Mammary epithelial cell (primary cell): ENCODE measurements at regions of chr3 and their contacts with region 1.

Region 1: GRCh38 chr3:41198950-41199865 is at the start of gene CTNNB1:
- DNase-seq: peak; percentile 93
- H3K4me3 ChIP-seq: peak within 1 kb of the TSS; percentile 97 to 100 (median 100)
- H3K27ac ChIP-seq: peak within 1 kb of the TSS; percentile 89
- H3K4me1 ChIP-seq: peaks cover 8% of the 10 kb centered on the region
- H3K27me3 ChIP-seq: no peaks in the 10 kb centered on the region
- CTCF ChIP-seq: peak in 1 of 2 donors; percentile 16
- total RNA-seq, gene CTNNB1: 543 to 1,542 TPM

Region 2: DNA sequence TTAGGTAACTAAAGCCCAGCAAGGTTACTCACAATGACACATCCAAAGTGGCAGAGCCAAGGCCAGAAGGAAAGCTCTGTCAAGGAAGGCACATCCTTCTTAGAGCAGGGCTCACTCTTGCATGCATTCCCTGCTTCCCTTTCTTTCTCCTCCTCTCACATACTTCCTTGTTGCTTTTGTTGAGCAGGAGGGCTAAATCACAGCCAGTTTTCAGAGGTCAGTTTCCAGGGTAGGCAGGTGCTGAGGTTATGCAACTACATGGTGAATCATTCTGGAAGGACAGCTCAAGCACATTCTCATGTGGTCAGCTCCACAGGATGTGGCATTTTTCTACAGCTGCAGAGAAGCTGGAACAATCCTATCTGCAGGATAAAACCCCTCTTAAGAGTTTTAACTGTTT is 398.9 kb before region 1 on chr3:
- CTCF ChIA-PET with region 1: no interaction called
- dilution Hi-C with region 1: no loop called
- in situ Hi-C with region 1: no loop called
- intact Hi-C with region 1: loop called (anchors 5 kb)
- DNase-seq: peak; percentile 96
- H3K4me3 ChIP-seq: peak overlapping the region in 1 of 3 experiments; percentile 22
- H3K27ac ChIP-seq: peak overlapping the region; percentile 46
- H3K4me1 ChIP-seq: peaks cover 29% of the 10 kb centered on the region
- H3K27me3 ChIP-seq: no peaks in the 10 kb centered on the region
- CTCF ChIP-seq: no peak

Region 3: GRCh38 chr3:40971191-40972168 is 227.7 kb before region 1 on chr3:
- CTCF ChIA-PET with region 1: no interaction called
- dilution Hi-C with region 1: no loop called
- in situ Hi-C with region 1: no loop called
- intact Hi-C with region 1: loop called (anchors 2 kb)
- DNase-seq: peak; percentile 99
- H3K4me3 ChIP-seq: no peak overlapping the region
- H3K27ac ChIP-seq: peak overlapping the region; percentile 85
- H3K4me1 ChIP-seq: peaks cover 23% of the 10 kb centered on the region
- H3K27me3 ChIP-seq: no peaks in the 10 kb centered on the region
- CTCF ChIP-seq: peak; percentile 32 to 38

Region 4: DNA sequence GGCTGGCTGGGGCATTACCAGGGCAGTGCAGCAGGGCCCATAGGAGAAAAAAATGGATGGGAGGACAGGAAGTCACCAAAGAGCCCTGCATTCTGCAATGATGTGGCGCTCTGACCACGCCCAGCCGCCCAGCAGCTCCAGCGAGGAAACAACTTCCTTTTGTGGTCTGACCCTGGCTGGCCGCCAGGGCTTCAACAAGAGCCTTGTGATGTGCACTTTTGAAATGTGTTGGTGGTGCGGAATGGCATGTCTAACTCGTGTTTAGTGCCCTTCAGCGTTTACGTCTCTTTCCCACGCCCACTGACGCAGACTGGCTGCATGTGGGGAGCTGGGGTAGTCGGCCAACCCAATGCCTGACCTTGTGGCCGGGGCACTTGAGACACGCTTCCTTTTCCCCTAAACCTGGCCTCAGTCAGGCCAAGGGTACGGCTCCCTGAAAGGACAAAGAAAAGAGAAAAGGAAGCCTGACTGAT is 81.8 kb before region 1 on chr3:
- CTCF ChIA-PET with region 1: no interaction called
- dilution Hi-C with region 1: no loop called
- in situ Hi-C with region 1: no loop called
- intact Hi-C with region 1: loop called (anchors 5 kb)
- DNase-seq: peak; percentile 98
- H3K4me3 ChIP-seq: no peak overlapping the region
- H3K27ac ChIP-seq: peak overlapping the region; percentile 74
- H3K4me1 ChIP-seq: peaks cover 16% of the 10 kb centered on the region
- H3K27me3 ChIP-seq: no peaks in the 10 kb centered on the region
- CTCF ChIP-seq: no peak

Region 5: GRCh38 chr3:41137686-41138111 is 61.5 kb before region 1 on chr3:
- CTCF ChIA-PET with region 1: no interaction called
- dilution Hi-C with region 1: loop called (anchors 5 kb)
- in situ Hi-C with region 1: no loop called
- intact Hi-C with region 1: no loop called
- DNase-seq: peak; percentile 96
- H3K4me3 ChIP-seq: no peak overlapping the region
- H3K27ac ChIP-seq: peak overlapping the region; percentile 92
- H3K4me1 ChIP-seq: peaks cover 26% of the 10 kb centered on the region
- H3K27me3 ChIP-seq: no peaks in the 10 kb centered on the region
- CTCF ChIP-seq: no peak

Region 6: GRCh38 chr3:41450416-41451231 is 251.4 kb after region 1 on chr3:
- CTCF ChIA-PET with region 1: no interaction called
- dilution Hi-C with region 1: no loop called
- in situ Hi-C with region 1: no loop called
- intact Hi-C with region 1: loop called (anchors 10 kb)
- DNase-seq: no peak
- H3K4me3 ChIP-seq: no peak overlapping the region
- H3K27ac ChIP-seq: no peak overlapping the region
- H3K4me1 ChIP-seq: no peaks in the 10 kb centered on the region
- H3K27me3 ChIP-seq: no peaks in the 10 kb centered on the region
- CTCF ChIP-seq: peak; percentile 13 to 44